Gastrocnemius medialis (tissue), 4 donors: ENCODE measurements at regions of chr15 and their contacts with region 1.

Region 1: DNA sequence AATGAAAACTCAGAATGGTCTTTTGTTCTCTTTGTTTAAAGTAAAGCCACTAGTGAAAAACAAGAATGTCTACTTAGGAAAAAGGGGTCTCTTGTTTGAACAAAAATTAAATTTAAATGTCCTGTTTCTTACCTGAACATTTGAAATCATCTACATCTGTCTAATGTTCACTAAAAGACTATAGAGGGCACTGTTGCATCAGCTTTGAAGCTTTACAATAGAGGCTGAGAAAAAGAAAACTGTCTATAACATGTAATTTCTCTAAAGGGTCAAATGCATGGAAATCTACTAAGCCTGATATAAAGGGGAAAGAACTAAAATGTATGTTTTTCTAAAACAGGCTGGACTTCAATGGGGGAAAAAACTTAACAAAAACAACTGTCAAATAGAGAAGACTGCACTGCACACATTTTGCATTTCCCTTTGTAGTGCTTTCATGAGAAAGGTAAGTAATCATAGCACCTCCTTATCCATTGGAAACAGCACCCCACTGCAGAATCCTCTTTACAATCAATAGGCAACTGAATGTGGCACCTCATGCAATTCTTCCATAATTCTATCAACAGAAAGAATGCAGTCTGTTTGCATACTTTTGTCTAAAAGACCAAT is 26.3 kb downstream of the DPH6 start:
- DNase-seq: no peak
- ATAC-seq: peak in 1 of 2 donors; percentile 58
- H3K4me3 ChIP-seq: no peak overlapping the region
- H3K27ac ChIP-seq: no peak overlapping the region
- H3K4me1 ChIP-seq: no peaks in the 10 kb centered on the region
- H3K27me3 ChIP-seq: no peaks in the 10 kb centered on the region
- CTCF ChIP-seq: peak in 4 of 5 experiments; percentile 46 to 64 (median 53)
- POLR2A ChIP-seq: no peak

Region 2: DNA sequence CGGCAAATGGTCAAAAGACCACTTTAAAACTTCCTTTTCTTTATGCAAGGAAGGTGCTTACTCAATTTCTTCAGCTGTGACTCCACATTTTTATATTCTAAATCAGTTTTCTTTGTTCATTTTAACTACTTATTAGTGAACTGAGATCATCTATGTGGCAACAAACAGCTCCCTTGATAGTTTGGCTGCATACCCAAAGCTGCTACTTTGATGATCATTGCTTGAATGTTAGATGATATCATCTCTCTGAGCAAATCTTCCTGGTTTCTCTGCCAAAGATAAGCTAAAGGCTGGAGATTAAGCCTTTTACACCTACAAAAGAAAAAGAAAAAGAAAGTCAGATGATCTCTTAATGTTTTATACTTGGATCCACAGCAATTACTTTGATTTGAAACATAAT is 69.2 kb before region 1 on chr15:
- in situ Hi-C with region 1: no loop called
- intact Hi-C with region 1: no loop called
- DNase-seq: no peak
- ATAC-seq: no peak
- H3K4me3 ChIP-seq: no peak overlapping the region
- H3K27ac ChIP-seq: no peak overlapping the region
- H3K4me1 ChIP-seq: no peaks in the 10 kb centered on the region
- H3K27me3 ChIP-seq: no peaks in the 10 kb centered on the region
- CTCF ChIP-seq: no peak
- POLR2A ChIP-seq: no peak

Region 3: GRCh38 chr15:35618260-35619188 is 98.9 kb after region 1 on chr15:
- in situ Hi-C with region 1: no loop called
- intact Hi-C with region 1: no loop called
- DNase-seq: no peak
- ATAC-seq: no peak
- H3K4me3 ChIP-seq: no peak overlapping the region
- H3K27ac ChIP-seq: no peak overlapping the region
- H3K4me1 ChIP-seq: no peaks in the 10 kb centered on the region
- H3K27me3 ChIP-seq: no peaks in the 10 kb centered on the region
- CTCF ChIP-seq: no peak
- POLR2A ChIP-seq: no peak

Region 4: GRCh38 chr15:35751413-35752133 is 231.9 kb after region 1 on chr15:
- in situ Hi-C with region 1: no loop called
- intact Hi-C with region 1: loop called (anchors 5 kb)
- DNase-seq: peak; percentile 34 to 42
- ATAC-seq: peak; percentile 77 to 82
- H3K4me3 ChIP-seq: peak overlapping the region in 2 of 4 donors; percentile 17 to 21
- H3K27ac ChIP-seq: no peak overlapping the region
- H3K4me1 ChIP-seq: peaks cover 0 to 5% of the 10 kb centered on the region in 2 donors
- H3K27me3 ChIP-seq: no peaks in the 10 kb centered on the region
- CTCF ChIP-seq: peak; percentile 30 to 79 (median 62)
- POLR2A ChIP-seq: no peak